Caco-2 (cell line): ENCODE measurements at regions of chr20 and their contacts with region 1.

Region 1: GRCh38 chr20:47677635-47678453 is 107.4 kb downstream of the SULF2 start:
- DNase-seq: peak; percentile 87 to 93
- H3K4me3 ChIP-seq: no peak overlapping the region
- H3K4me3 Mint-ChIP-seq: no peak overlapping the region
- H3K27ac Mint-ChIP-seq: peak overlapping the region; percentile 31
- H3K4me1 ChIP-seq: peaks cover 27% of the 10 kb centered on the region
- H3K4me1 Mint-ChIP-seq: no peaks in the 10 kb centered on the region
- H3K27me3 ChIP-seq: no peaks in the 10 kb centered on the region
- H3K27me3 Mint-ChIP-seq: no peaks in the 10 kb centered on the region
- CTCF ChIP-seq: peak; percentile 99 to 100

Region 2: DNA sequence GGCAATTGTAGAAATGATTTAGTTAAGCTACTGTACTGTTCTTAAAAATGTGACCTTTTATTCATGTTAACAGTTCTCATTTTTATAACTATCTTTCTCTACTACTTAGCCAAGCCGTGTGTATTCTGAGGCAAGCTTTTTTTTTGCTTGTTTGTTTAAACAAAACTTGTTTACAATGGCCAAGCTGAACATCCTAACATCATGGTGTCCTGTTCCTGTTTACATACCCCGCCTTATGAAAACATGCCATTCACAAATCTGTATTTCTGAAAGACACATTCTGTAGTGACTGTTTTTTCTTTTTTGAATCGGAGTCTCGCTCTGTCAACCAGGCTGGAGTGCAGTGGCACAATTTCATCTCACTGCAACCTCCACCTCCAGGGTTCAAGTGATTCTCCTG is 35.2 kb before region 1 on chr20:
- CTCF ChIA-PET with region 1: no interaction called
- POLR2A ChIA-PET with region 1: no interaction called
- intact Hi-C with region 1: no loop called
- DNase-seq: no peak
- H3K4me3 ChIP-seq: no peak overlapping the region
- H3K4me3 Mint-ChIP-seq: no peak overlapping the region
- H3K27ac Mint-ChIP-seq: peak overlapping the region; percentile 5
- H3K4me1 ChIP-seq: no peaks in the 10 kb centered on the region
- H3K4me1 Mint-ChIP-seq: peaks cover 9% of the 10 kb centered on the region
- H3K27me3 ChIP-seq: no peaks in the 10 kb centered on the region
- H3K27me3 Mint-ChIP-seq: no peaks in the 10 kb centered on the region
- CTCF ChIP-seq: no peak

Region 3: DNA sequence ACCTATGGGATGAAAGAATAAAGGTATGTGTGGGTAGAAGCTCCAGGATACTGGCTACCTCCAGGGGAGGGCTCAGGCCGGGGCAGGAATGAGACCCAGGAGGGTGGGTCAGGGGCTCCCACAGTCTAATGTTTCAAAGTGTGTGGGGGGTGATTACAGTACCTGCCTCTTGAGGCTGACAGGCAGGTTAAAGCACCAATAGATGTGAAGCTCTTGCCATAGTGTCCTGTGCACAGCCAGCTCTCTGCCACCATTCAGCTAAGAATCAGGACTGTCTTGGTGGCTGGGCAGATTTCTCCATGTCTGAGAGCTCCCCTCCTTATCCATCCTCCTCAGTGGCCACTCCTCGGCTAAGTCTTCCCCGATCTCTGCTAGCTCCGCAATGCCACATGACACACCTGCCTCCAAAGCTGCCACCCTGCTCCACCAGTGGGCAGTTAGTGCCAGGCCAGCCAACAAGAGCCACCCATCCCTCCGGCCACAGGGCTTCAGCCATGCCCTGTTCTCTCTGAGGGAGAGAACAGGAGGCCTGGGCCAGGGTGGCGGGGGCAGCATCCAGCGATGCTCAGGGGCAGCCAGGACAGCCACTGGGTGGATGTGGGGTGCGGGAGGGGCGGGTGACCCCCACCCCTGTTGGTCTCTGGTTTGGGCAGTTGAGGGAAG is 16.0 kb after region 1 on chr20:
- CTCF ChIA-PET with region 1: interaction called, 10 read pairs
- POLR2A ChIA-PET with region 1: no interaction called
- intact Hi-C with region 1: no loop called
- DNase-seq: no peak
- H3K4me3 ChIP-seq: no peak overlapping the region
- H3K4me3 Mint-ChIP-seq: no peak overlapping the region
- H3K27ac Mint-ChIP-seq: no peak overlapping the region
- H3K4me1 ChIP-seq: no peaks in the 10 kb centered on the region
- H3K4me1 Mint-ChIP-seq: no peaks in the 10 kb centered on the region
- H3K27me3 ChIP-seq: no peaks in the 10 kb centered on the region
- H3K27me3 Mint-ChIP-seq: no peaks in the 10 kb centered on the region
- CTCF ChIP-seq: no peak

Region 4: GRCh38 chr20:47713878-47714450 is 36.1 kb after region 1 on chr20:
- CTCF ChIA-PET with region 1: interaction called, 7 read pairs
- POLR2A ChIA-PET with region 1: no interaction called
- intact Hi-C with region 1: loop called (anchors 1 kb)
- DNase-seq: no peak
- H3K4me3 ChIP-seq: no peak overlapping the region
- H3K4me3 Mint-ChIP-seq: no peak overlapping the region
- H3K27ac Mint-ChIP-seq: no peak overlapping the region
- H3K4me1 ChIP-seq: no peaks in the 10 kb centered on the region
- H3K4me1 Mint-ChIP-seq: no peaks in the 10 kb centered on the region
- H3K27me3 ChIP-seq: no peaks in the 10 kb centered on the region
- H3K27me3 Mint-ChIP-seq: no peaks in the 10 kb centered on the region
- CTCF ChIP-seq: no peak

Region 5: DNA sequence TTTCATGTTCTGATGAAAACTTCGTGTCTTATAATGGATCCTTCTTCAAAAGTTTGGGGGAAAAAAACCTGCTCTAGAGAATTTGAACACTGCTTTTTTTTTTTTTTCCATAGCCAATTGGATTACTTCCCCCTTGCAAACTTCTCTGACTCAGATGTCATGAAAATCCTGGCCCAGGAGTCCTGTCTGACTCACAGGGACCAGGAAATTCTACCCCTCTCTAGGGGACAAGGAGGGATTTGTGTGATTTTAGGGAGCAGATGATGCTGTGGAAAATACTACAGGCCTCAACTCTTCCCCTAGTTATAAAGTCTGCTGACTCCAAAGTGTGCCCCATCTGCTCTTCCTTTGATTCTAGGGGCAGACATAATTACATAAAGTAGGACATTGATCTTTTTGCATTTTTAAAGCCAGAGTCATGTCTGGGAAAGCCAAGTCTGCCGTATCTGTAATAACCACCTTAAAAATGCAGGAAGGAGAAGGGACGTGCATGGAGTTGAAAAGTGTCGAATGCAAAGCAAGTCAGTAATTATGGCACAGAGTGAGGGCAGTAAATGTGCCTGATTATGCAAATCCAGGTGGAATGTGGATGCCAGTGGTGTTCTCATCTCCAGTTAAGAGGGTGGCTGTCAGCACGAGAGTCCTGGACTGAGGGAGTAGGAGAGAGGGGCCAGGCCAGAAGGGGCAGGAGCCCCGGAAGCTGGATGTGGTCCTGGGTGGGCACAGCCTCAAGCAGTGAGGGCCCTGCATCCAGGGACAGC is 251.7 kb after region 1 on chr20:
- CTCF ChIA-PET with region 1: no interaction called
- POLR2A ChIA-PET with region 1: no interaction called
- intact Hi-C with region 1: no loop called
- DNase-seq: no peak
- H3K4me3 ChIP-seq: no peak overlapping the region
- H3K4me3 Mint-ChIP-seq: no peak overlapping the region
- H3K27ac Mint-ChIP-seq: no peak overlapping the region
- H3K4me1 ChIP-seq: no peaks in the 10 kb centered on the region
- H3K4me1 Mint-ChIP-seq: no peaks in the 10 kb centered on the region
- H3K27me3 ChIP-seq: no peaks in the 10 kb centered on the region; the same call in 1 of the 2 replicates
- H3K27me3 Mint-ChIP-seq: peaks cover 11% of the 10 kb centered on the region
- CTCF ChIP-seq: no peak